ENCODE measurements at regions of chr19 and their contacts with region 1.

Region 1: DNA sequence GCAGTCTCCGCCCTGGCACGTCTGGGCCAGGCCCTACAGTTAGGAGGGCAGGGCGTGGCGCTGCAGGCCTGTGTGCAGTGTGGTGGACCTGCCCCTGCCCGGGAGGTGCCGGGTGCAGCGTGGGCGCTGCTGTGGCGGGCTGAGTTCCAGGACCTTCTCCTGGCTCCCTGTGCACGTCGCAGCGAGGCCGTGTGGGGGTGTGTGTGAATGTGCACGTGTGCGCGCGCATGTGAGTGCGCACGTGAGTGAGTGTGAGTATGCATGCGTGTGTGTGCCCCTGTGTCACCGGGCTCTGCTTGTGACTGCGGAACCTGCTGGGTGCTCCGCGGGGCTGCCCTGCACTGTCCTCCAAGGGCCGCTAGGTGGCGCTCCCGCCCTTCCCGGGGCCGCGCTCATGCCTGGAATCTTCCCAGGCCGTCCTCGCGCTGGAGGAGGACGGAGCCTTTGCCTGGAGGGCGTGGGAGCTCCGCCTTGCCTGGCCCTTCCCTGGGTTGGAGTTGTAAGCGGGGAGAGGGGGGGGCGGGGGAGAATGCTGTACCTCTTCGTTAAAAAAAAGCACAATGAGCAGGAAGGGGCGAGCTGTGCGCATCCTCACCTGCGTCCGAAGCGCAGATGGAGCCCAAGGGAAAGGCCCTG is 79.3 kb downstream of the KDM4B start:
- DNase-seq: peak; percentile 62 to 75
- ATAC-seq: peak; percentile 84 to 91 (median 87)
- H3K4me3 ChIP-seq: no peak overlapping the region
- H3K4me3 Mint-ChIP-seq: no peak overlapping the region
- H3K27ac ChIP-seq: no peak overlapping the region
- H3K27ac Mint-ChIP-seq: no peak overlapping the region
- H3K4me1 ChIP-seq: peaks cover 16% of the 10 kb centered on the region
- H3K4me1 Mint-ChIP-seq: peaks cover 0 to 11% of the 10 kb centered on the region in 2 donors
- H3K27me3 ChIP-seq: no peaks in the 10 kb centered on the region
- H3K27me3 Mint-ChIP-seq: no peaks in the 10 kb centered on the region
- CTCF ChIP-seq: peak; percentile 95

Region 2: DNA sequence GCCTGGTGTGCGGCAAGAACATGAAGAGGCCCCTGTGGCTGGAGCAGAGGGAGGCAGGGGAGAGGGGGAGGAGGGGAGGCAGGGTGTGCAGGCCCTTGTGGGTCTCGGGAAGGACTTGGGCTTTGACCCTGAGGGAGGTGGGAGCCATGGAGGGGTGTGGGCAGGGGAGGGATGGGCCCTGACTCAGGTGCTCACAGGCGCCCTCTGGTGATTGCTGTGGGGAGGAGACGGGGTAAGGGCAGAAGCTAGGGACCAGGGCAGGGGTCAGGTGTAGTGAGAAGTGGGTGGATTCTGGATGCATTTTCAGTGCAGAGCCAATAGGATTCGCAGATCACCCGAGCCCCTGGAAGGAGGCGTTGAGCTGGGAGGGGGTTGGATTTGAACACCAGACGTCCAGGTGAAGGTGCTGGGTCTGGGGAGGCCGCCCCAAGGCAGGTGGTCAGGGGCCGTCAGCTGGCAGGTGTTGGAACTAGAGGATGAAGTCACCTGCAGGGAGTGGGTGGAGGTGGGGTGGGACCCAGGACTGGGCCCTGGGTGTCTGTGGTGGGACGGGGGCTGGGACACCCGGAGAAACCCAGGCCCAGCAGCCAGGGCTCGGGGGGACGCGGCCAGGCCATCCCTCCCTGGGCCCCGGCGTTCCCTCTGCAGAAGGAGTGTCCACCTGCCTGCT is 106.1 kb after region 1 on chr19:
- intact Hi-C with region 1: loop called (anchors 1 kb)
- DNase-seq: peak in 1 of 2 donors; percentile 70
- ATAC-seq: peak; percentile 47 to 77 (median 77)
- H3K4me3 ChIP-seq: no peak overlapping the region
- H3K4me3 Mint-ChIP-seq: no peak overlapping the region
- H3K27ac ChIP-seq: no peak overlapping the region
- H3K27ac Mint-ChIP-seq: no peak overlapping the region
- H3K4me1 ChIP-seq: no peaks in the 10 kb centered on the region
- H3K4me1 Mint-ChIP-seq: no peaks in the 10 kb centered on the region
- H3K27me3 ChIP-seq: no peaks in the 10 kb centered on the region
- H3K27me3 Mint-ChIP-seq: no peaks in the 10 kb centered on the region
- CTCF ChIP-seq: peak; percentile 43

Region 3: DNA sequence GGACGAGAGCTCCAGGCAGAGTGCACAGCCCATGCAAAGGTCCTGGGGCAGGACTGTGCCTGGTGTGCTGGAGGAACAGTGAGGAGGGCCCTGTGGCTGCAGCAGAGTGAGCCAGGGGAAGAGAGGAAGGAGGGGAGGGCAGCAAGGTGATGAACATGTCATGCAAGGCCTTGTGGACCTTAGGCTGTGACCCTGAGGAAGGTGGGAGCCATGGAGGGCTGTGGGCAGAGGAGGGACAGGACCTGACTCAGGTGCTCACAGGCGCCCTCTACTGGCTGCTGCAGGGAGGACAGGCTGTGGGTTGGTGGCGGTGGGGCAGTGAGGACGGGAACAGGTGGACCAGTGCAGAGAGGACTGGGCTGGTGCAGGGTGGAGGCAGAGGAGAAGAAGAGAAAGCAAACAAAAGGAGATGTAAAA is 122.1 kb after region 1 on chr19:
- intact Hi-C with region 1: loop called (anchors 1 kb)
- DNase-seq: peak; percentile 60 to 63
- ATAC-seq: peak; percentile 58 to 65 (median 61)
- H3K4me3 ChIP-seq: no peak overlapping the region
- H3K4me3 Mint-ChIP-seq: no peak overlapping the region
- H3K27ac ChIP-seq: no peak overlapping the region
- H3K27ac Mint-ChIP-seq: no peak overlapping the region
- H3K4me1 ChIP-seq: no peaks in the 10 kb centered on the region
- H3K4me1 Mint-ChIP-seq: peaks cover 0 to 5% of the 10 kb centered on the region in 2 donors
- H3K27me3 ChIP-seq: no peaks in the 10 kb centered on the region
- H3K27me3 Mint-ChIP-seq: peaks cover 8 to 10% of the 10 kb centered on the region in 2 donors
- CTCF ChIP-seq: peak; percentile 46

Region 4: GRCh38 chr19:5577785-5578493 is 529.7 kb after region 1 on chr19:
- intact Hi-C with region 1: loop called (anchors 5 kb)
- DNase-seq: peak; percentile 71 to 87
- ATAC-seq: peak; percentile 88 to 93 (median 91)
- H3K4me3 ChIP-seq: no peak overlapping the region
- H3K4me3 Mint-ChIP-seq: no peak overlapping the region
- H3K27ac ChIP-seq: no peak overlapping the region
- H3K27ac Mint-ChIP-seq: peak overlapping the region in 1 of 2 donors; percentile 47
- H3K4me1 ChIP-seq: peaks cover 4% of the 10 kb centered on the region
- H3K4me1 Mint-ChIP-seq: peaks cover 6 to 11% of the 10 kb centered on the region in 2 donors
- H3K27me3 ChIP-seq: no peaks in the 10 kb centered on the region
- H3K27me3 Mint-ChIP-seq: no peaks in the 10 kb centered on the region
- CTCF ChIP-seq: peak; percentile 99

Measured in natural killer cell (primary cell).